ENCODE measurements at regions of chr4 and their contacts with region 1.

Region 1: DNA sequence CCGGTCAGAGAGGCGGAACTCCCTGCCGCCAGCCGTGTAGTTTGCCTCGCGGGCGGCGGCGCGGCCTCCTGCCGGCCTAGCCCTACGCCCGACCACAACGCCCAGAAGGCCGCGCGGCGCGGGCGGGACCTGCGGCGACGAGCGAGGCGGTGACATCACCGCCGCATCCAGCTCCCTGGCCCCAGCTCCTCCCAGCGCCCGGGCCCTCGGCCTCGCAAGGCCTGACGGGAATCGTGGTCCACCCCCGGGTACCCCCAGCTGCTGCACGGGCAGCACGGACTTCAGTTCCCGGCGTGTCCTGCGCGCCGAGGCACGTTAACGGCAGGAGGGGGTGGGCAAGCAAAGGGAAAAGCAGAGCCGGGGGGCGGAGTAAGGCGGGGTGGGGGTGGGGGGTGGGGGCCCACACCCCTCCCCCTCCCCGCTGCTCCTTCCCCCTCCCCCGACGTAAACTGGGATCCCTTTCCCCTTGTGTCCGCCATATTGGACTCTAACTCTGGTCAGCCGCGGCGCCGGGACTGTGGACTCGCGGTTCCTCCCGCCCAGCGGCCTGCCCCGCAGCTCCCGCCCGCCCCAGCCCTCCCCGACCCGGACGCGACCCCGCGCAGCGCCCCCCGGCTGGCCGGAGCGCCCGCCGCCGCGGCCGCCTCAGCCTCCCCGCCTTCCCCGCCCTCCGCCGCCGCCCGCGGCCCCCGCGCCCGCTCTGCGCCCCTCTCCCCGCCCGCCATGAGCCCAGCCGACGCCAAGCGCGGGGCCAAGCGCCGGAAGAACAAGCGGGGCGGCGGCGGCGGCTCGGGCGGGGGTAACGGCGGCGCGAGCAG is at the start of gene FAM193A:
- DNase-seq: peak; percentile 99
- H3K4me3 Mint-ChIP-seq: peak within 1 kb of the TSS; percentile 86
- H3K27ac Mint-ChIP-seq: peak within 1 kb of the TSS; percentile 83
- H3K4me1 Mint-ChIP-seq: peaks cover 18% of the 10 kb centered on the region
- H3K27me3 Mint-ChIP-seq: no peaks in the 10 kb centered on the region
- total RNA-seq, gene FAM193A: 20.1 to 20.4 TPM

Region 2: GRCh38 chr4:1556541-1557220 is 979.7 kb before region 1 on chr4:
- CTCF ChIA-PET with region 1: no interaction called
- intact Hi-C with region 1: no loop called
- DNase-seq: no peak
- H3K4me3 Mint-ChIP-seq: no peak overlapping the region
- H3K27ac Mint-ChIP-seq: no peak overlapping the region
- H3K4me1 Mint-ChIP-seq: no peaks in the 10 kb centered on the region
- H3K27me3 Mint-ChIP-seq: peaks cover 6% of the 10 kb centered on the region

Region 3: DNA sequence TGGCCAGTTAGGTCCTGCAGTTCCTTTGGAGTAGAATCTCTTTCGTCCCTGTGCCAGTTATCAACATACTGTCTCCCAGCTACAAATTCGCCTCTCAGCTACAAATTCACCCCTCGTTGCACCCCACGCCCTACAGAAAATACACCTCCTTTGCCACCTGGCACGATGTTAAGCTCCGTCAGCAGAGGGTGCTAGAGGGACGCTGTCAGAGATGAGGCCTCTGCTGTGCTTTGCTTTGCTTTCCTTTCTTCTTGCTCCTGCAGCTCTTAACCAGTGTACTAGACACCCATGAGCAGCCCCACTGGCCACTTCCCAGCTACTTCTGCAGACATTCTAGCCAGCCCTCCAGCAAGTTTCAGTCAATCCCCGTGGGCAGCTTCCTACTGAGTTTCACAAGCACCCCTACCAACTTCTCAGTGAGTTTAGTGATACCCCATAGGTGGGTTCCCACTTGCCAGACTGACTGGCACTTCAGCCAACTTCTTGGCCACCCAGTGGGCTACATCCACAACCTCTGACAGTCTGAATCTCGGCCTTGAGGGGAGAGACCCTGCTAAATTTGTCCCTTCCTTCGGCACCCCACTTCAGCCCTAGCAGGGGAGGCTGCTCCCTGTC is 316.3 kb before region 1 on chr4:
- CTCF ChIA-PET with region 1: no interaction called
- intact Hi-C with region 1: loop called (anchors 2 kb)
- DNase-seq: peak; percentile 90
- H3K4me3 Mint-ChIP-seq: no peak overlapping the region
- H3K27ac Mint-ChIP-seq: no peak overlapping the region
- H3K4me1 Mint-ChIP-seq: no peaks in the 10 kb centered on the region
- H3K27me3 Mint-ChIP-seq: no peaks in the 10 kb centered on the region

Region 4: GRCh38 chr4:2281575-2282343 is 254.6 kb before region 1 on chr4:
- CTCF ChIA-PET with region 1: no interaction called
- intact Hi-C with region 1: loop called (anchors 5 kb)
- DNase-seq: peak; percentile 94
- H3K4me3 Mint-ChIP-seq: peak overlapping the region; percentile 17
- H3K27ac Mint-ChIP-seq: peak overlapping the region; percentile 98
- H3K4me1 Mint-ChIP-seq: peaks cover 37% of the 10 kb centered on the region
- H3K27me3 Mint-ChIP-seq: no peaks in the 10 kb centered on the region

Region 5: GRCh38 chr4:2570551-2571222 is 34.3 kb after region 1 on chr4:
- CTCF ChIA-PET with region 1: interaction called, 3 read pairs
- intact Hi-C with region 1: loop called (anchors 1 kb)
- DNase-seq: peak; percentile 89
- H3K4me3 Mint-ChIP-seq: peak overlapping the region; percentile 46
- H3K27ac Mint-ChIP-seq: peak overlapping the region; percentile 74
- H3K4me1 Mint-ChIP-seq: peaks cover 58% of the 10 kb centered on the region
- H3K27me3 Mint-ChIP-seq: no peaks in the 10 kb centered on the region

Region 6: GRCh38 chr4:2714061-2714770 is 177.8 kb after region 1 on chr4:
- CTCF ChIA-PET with region 1: no interaction called
- intact Hi-C with region 1: loop called (anchors 5 kb)
- DNase-seq: peak; percentile 81
- H3K4me3 Mint-ChIP-seq: peak overlapping the region; percentile 7
- H3K27ac Mint-ChIP-seq: peak overlapping the region; percentile 86
- H3K4me1 Mint-ChIP-seq: peaks cover 40% of the 10 kb centered on the region
- H3K27me3 Mint-ChIP-seq: no peaks in the 10 kb centered on the region

Region 7: GRCh38 chr4:3037957-3038461 is 501.6 kb after region 1 on chr4:
- CTCF ChIA-PET with region 1: no interaction called
- intact Hi-C with region 1: loop called (anchors 1 kb)
- DNase-seq: peak; percentile 45
- H3K4me3 Mint-ChIP-seq: peak overlapping the region; percentile 69
- H3K27ac Mint-ChIP-seq: no peak overlapping the region
- H3K4me1 Mint-ChIP-seq: peaks cover 37% of the 10 kb centered on the region
- H3K27me3 Mint-ChIP-seq: no peaks in the 10 kb centered on the region